ENCODE measurements at regions of chr17 and their contacts with region 1.

Region 1: GRCh38 chr17:27862004-27862403 is 31.2 kb downstream of the LYRM9 start:
- DNase-seq: no peak

Region 2: GRCh38 chr17:27760069-27760885 is 101.7 kb before region 1 on chr17:
- intact Hi-C with region 1: no loop called
- DNase-seq: peak; percentile 93

Region 3: DNA sequence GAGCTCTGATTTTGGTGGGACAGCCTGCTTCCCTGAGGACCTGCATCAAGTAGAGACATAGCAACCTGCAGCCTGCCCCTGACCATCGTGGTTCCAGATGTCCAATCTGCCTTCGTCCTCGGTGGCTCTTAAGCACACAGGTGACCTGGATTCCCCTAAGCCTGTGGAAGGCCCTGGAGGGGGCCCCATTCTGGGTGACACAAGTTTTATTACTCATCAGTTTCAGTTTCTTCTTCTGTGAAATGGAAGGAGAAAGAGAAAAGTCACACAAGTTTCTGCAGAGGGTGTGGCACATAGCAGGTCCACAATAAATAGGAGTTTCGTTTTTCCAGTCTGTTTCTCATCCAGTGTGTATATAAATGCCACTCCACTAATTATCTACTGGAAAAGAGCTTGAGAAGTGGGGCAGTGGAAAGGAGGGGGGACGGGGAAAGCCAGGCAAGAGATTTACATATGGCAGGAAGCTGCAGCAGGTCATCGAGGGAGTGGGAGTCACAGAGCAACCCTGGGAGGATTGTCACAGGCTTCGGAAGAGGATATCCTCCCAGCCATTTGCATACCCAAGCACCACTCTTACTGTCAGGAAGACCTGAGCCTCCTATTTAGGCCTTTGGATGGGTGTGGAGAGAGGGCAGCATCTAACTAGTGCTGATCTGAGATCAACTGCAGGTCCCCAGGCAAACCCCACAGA is 51.6 kb before region 1 on chr17:
- intact Hi-C with region 1: loop called in 1 of 2 experiments (anchors 1 kb)
- DNase-seq: no peak